Calu3 (cell line): ENCODE measurements at regions of chr3 and their contacts with region 1.

Region 1: GRCh38 chr3:136734382-136735070 is 17.7 kb downstream of the STAG1 start:
- DNase-seq: no peak
- H3K4me3 Mint-ChIP-seq: peak overlapping the region; percentile 2
- H3K27ac Mint-ChIP-seq: peak overlapping the region; percentile 20
- H3K4me1 Mint-ChIP-seq: peaks cover 34% of the 10 kb centered on the region
- H3K27me3 Mint-ChIP-seq: no peaks in the 10 kb centered on the region
- CTCF ChIP-seq: no peak

Region 2: DNA sequence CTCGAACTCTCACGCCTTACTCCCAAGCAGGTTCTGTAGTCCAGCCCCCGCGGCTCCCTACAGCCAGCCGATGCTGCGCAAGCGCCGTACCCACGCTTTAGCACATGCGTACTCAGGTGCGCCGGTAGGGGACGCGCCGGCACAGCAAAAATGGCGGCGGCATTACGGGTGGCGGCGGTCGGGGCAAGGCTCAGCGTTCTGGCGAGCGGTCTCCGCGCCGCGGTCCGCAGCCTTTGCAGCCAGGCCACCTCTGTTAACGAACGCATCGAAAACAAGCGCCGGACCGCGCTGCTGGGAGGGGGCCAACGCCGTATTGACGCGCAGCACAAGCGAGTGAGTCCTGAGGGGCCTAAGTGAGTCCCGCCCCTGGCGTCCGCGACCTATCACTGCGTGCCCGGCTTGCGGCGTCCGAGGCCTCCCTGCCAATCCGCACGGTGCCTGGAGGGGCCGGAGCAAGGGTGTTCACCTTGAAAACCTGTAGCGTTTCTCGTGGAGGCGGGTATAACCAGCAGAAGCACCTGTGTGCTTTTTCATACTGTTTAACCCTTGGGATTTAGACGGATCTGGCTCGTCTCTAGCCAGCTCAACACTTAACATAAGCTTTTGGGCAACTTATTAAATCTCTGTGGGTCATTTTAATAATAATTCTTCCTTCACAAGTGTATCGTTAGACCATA is 484.2 kb before region 1 on chr3 and contains the start of gene PCCB:
- CTCF ChIA-PET with region 1: no interaction called
- intact Hi-C with region 1: no loop called
- DNase-seq: peak; percentile 99
- H3K4me3 Mint-ChIP-seq: peak within 1 kb of the TSS; percentile 89
- H3K27ac Mint-ChIP-seq: peak within 1 kb of the TSS; percentile 96
- H3K4me1 Mint-ChIP-seq: peaks cover 26% of the 10 kb centered on the region
- H3K27me3 Mint-ChIP-seq: no peaks in the 10 kb centered on the region
- CTCF ChIP-seq: peak; percentile 94
- total RNA-seq, gene PCCB: 52.3 and 63.5 TPM in 2 replicates

Region 3: GRCh38 chr3:136624894-136625815 is 109.4 kb before region 1 on chr3:
- CTCF ChIA-PET with region 1: no interaction called
- intact Hi-C with region 1: loop called (anchors 5 kb)
- DNase-seq: peak; percentile 84
- H3K4me3 Mint-ChIP-seq: peak overlapping the region; percentile 66
- H3K27ac Mint-ChIP-seq: peak overlapping the region; percentile 97
- H3K4me1 Mint-ChIP-seq: peaks cover 71% of the 10 kb centered on the region
- H3K27me3 Mint-ChIP-seq: no peaks in the 10 kb centered on the region
- CTCF ChIP-seq: no peak

Region 4: DNA sequence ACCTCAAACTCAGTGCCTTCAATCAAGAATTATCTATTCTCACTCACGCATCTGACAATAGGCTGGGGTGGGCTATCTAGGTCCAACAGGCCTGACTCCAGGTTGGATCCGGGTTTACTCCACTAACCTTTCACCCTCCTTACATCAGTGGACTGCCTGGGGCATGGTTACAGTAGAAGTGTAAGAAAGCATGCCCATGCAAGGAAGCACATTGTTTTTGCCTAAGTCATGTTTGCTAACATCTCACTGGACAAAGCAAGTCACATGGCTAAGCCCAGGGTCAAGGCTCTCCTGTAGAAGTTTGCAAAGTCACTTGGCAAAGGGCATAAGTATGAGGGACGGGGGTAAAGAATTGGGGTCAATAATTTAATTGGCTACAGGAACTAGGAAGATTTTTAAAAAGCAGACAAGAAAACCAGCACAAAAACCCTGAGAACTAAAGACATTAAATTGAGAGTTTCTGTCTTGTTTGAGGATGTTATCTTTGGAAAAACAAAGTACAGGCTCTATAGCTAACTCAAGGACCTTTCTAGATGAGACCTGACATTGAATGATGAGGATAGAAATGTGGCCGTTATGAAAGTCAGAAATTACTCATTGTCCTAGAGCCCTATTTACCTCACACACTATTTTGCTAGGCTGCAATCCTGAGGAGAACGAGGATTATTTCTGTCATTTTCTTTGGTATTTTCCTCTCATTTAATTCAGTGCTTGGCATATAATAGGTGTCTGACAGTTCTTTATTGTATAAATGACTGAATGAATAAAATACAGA is 437.5 kb after region 1 on chr3:
- CTCF ChIA-PET with region 1: no interaction called
- intact Hi-C with region 1: no loop called
- DNase-seq: no peak
- H3K4me3 Mint-ChIP-seq: no peak overlapping the region
- H3K27ac Mint-ChIP-seq: no peak overlapping the region
- H3K4me1 Mint-ChIP-seq: no peaks in the 10 kb centered on the region
- H3K27me3 Mint-ChIP-seq: no peaks in the 10 kb centered on the region
- CTCF ChIP-seq: no peak